ENCODE measurements at regions of chr5 and their contacts with region 1.

Region 1: DNA sequence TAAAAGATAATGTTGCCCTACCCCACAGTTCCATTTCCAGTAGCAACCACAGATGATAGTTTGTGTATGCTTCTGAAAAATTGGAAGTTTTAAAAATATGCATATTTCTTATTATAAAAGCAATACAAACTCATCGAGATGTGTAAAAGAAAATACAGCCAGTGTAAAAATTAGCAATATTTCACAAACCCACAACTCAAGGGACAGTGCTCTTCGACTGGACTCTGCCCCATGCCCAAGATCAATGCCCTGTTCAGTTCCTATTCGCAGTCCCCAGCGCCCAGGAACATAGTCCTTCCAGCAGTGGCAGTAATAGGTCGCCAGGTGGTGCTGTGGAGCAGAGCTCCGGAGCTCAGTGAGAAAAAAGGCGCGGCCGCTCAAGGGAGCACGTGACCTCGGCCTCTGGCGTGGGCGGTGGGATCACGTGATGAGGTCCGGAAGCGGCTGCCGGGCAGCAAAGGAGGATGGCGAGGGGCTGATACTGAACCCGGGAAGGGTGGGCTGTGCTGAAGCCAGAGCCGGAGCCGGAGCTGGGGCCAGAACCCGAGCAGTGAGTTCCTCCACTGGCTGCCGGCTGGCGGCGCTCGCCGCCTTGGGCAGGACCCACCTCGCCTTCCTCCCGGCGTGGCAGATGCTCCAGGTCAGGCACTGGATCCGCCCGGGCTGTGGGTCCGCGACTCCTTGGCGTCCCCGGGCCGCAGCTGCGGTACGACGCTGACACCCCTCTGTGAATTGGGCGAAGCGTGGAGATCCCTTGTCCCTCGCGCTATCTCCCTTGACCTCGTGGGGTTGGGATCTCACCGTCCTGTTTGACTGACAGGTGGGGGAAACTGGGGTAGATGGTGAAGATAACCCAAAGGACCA is at the start of gene SLC36A1:
- DNase-seq: peak; percentile 91 to 97 (median 93)
- H3K4me3 ChIP-seq: peak within 1 kb of the TSS; percentile 14 to 79 (median 63)
- H3K27ac ChIP-seq: peak within 1 kb of the TSS in 4 of 5 donors; percentile 16 to 65 (median 41)
- H3K4me1 ChIP-seq: peaks cover 0 to 15% of the 10 kb centered on the region in 2 donors
- H3K27me3 ChIP-seq: no peaks in the 10 kb centered on the region
- CTCF ChIP-seq: peak; percentile 94 to 99 (median 98)
- POLR2A ChIP-seq: peak; percentile 26 to 36
- total RNA-seq, gene SLC36A1: 5.3 to 15.4 (median 10.0) TPM

Region 2: GRCh38 chr5:151499501-151500035 is 52.2 kb after region 1 on chr5:
- intact Hi-C with region 1: loop called (anchors 2 kb)
- DNase-seq: peak in 1 of 7 donors; percentile 7
- H3K4me3 ChIP-seq: no peak overlapping the region
- H3K27ac ChIP-seq: peak overlapping the region in 1 of 5 donors; percentile 36
- H3K4me1 ChIP-seq: no peaks in the 10 kb centered on the region
- H3K27me3 ChIP-seq: no peaks in the 10 kb centered on the region
- CTCF ChIP-seq: no peak
- POLR2A ChIP-seq: no peak

Region 3: GRCh38 chr5:151509836-151510235 is 62.4 kb after region 1 on chr5:
- intact Hi-C with region 1: no loop called
- DNase-seq: no peak
- H3K4me3 ChIP-seq: no peak overlapping the region
- H3K27ac ChIP-seq: no peak overlapping the region
- H3K4me1 ChIP-seq: no peaks in the 10 kb centered on the region
- H3K27me3 ChIP-seq: no peaks in the 10 kb centered on the region
- CTCF ChIP-seq: no peak
- POLR2A ChIP-seq: no peak

Region 4: DNA sequence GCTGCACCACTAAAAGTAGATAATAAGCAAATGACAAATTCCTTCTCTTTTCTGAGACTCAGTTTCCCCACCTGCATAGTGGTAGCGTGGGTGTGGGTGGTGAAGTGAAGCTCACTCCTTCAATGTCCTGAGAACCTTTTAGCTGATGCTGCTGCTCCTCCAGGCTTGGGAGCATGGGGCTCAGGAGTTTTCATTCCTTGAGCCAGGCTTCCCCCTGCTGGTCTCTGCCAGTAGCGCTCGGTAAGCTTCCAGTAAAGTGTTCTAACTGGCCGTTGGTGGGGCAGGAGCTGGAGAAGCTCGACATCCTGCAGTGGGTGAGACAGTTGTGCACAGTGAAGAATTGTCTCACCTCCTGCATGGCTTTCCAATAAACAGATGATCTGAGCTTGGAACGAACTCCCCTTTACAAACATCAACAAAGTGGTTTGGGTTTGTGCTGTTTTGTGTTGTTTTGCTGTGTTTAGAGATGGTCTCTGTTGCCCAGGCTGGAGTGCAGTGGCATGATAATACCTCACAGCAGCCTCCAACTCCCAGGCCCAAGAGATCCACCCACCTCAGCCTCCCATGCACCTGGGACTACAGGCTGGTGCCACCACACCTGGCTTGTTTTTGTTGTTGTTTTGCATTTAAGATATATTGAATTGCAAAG is 204.7 kb after region 1 on chr5:
- intact Hi-C with region 1: loop called (anchors 5 to 10 kb)
- DNase-seq: peak; percentile 77 to 92 (median 84)
- H3K4me3 ChIP-seq: no peak overlapping the region
- H3K27ac ChIP-seq: no peak overlapping the region
- H3K4me1 ChIP-seq: no peaks in the 10 kb centered on the region
- H3K27me3 ChIP-seq: no peaks in the 10 kb centered on the region
- CTCF ChIP-seq: peak; percentile 53 to 90 (median 81)
- POLR2A ChIP-seq: no peak

Region 5: DNA sequence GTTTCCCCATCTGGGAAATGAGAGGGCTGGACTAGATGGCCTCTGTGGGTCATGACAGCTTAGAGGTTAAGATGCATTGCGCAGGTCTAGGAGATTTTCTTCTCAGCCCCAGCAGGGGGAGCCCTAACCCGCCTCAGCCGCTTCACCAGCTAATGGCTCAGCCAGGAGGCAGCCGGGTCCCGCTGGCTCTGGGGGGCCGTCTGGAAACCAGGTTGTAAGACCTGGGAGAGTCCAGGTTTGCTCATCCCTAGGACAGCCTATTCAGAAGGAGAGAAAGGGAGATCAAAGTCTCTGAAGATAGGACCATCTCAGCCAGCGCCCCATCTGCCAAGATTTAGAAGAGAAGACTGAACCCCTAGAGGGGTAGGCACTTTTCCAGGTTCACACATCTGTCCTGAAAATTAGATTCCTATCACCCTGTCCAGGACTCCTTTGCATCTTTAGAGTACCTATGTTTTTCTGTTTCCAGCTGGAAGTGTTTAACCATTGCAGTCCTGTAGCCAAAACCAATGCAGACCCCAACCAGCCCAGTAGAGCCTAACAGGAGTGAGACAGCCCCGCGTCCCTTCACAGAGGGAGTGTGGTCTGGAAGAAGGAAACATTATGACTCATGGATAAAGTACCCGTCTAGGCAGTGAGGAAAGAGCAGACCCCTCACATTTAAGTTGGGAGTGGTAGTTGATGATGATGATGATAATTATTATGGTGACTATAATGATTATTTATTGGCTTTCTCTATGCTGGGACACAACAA is 211.8 kb after region 1 on chr5:
- intact Hi-C with region 1: loop called (anchors 5 to 10 kb)
- DNase-seq: peak; percentile 76 to 90 (median 84)
- H3K4me3 ChIP-seq: no peak overlapping the region
- H3K27ac ChIP-seq: peak overlapping the region in 2 of 5 donors; percentile 9 to 21
- H3K4me1 ChIP-seq: peaks cover 4 to 31% of the 10 kb centered on the region in 2 donors
- H3K27me3 ChIP-seq: no peaks in the 10 kb centered on the region
- CTCF ChIP-seq: peak; percentile 78 to 94 (median 89)
- POLR2A ChIP-seq: no peak

Region 6: GRCh38 chr5:151740336-151740942 is 293.0 kb after region 1 on chr5:
- intact Hi-C with region 1: loop called in 1 of 2 experiments (anchors 10 kb)
- DNase-seq: peak; percentile 77 to 92 (median 91)
- H3K4me3 ChIP-seq: peak overlapping the region in 1 of 4 donors; percentile 11
- H3K27ac ChIP-seq: peak overlapping the region; percentile 1 to 86 (median 81)
- H3K4me1 ChIP-seq: peaks cover 29 to 39% of the 10 kb centered on the region in 2 donors
- H3K27me3 ChIP-seq: no peaks in the 10 kb centered on the region
- CTCF ChIP-seq: peak; percentile 84 to 93 (median 90)
- POLR2A ChIP-seq: peak in 1 of 2 donors; percentile 54

Region 7: GRCh38 chr5:151825445-151825844 is 378.0 kb after region 1 on chr5:
- intact Hi-C with region 1: no loop called
- DNase-seq: peak; percentile 60 to 81 (median 62)
- H3K4me3 ChIP-seq: no peak overlapping the region
- H3K27ac ChIP-seq: no peak overlapping the region
- H3K4me1 ChIP-seq: no peaks in the 10 kb centered on the region
- H3K27me3 ChIP-seq: no peaks in the 10 kb centered on the region
- CTCF ChIP-seq: peak; percentile 75 to 88 (median 81)
- POLR2A ChIP-seq: no peak

Measured in adrenal gland (tissue), 19 donors.